HepG2 (cell line): ENCODE measurements at regions of chr6 and their contacts with region 1.

Region 1: GRCh38 chr6:7615611-7616383 is 25.8 kb downstream of the SNRNP48 start:
- DNase-seq: peak; percentile 72
- ATAC-seq: peak; percentile 64
- H3K4me3 ChIP-seq: peak overlapping the region in 1 of 3 experiments; percentile 10; a peak in 1 of 6 replicates
- H3K27ac ChIP-seq: no peak overlapping the region
- H3K4me1 ChIP-seq: peaks cover 21% of the 10 kb centered on the region
- H3K27me3 ChIP-seq: peaks cover 0 to 22% of the 10 kb centered on the region in 2 experiments; a peak in 3 of 5 replicates
- CTCF ChIP-seq: peak; percentile 88
- EP300 ChIP-seq: no peak
- POLR2A ChIP-seq: no peak
- RAD21 ChIP-seq: peak; percentile 83

Region 2: GRCh38 chr6:6676910-6677441 is 938.8 kb before region 1 on chr6:
- CTCF ChIA-PET with region 1: no interaction called
- POLR2A ChIA-PET with region 1: no interaction called
- in situ Hi-C with region 1: loop called (anchors 25 kb)
- intact Hi-C with region 1: no loop called
- DNase-seq: peak; percentile 67
- ATAC-seq: peak; percentile 69
- H3K4me3 ChIP-seq: no peak overlapping the region
- H3K27ac ChIP-seq: no peak overlapping the region
- H3K4me1 ChIP-seq: peaks cover 21% of the 10 kb centered on the region
- H3K27me3 ChIP-seq: peaks cover 0 to 10% of the 10 kb centered on the region in 2 experiments; a peak in 2 of 5 replicates
- CTCF ChIP-seq: peak; percentile 90
- EP300 ChIP-seq: no peak
- POLR2A ChIP-seq: no peak
- RAD21 ChIP-seq: peak; percentile 82

Region 3: GRCh38 chr6:7276199-7276524 is 339.6 kb before region 1 on chr6:
- CTCF ChIA-PET with region 1: interaction called, 18 read pairs
- POLR2A ChIA-PET with region 1: no interaction called
- in situ Hi-C with region 1: loop called (anchors 10 kb)
- intact Hi-C with region 1: loop called (anchors 1 kb)
- DNase-seq: no peak
- ATAC-seq: no peak
- H3K4me3 ChIP-seq: no peak overlapping the region
- H3K27ac ChIP-seq: no peak overlapping the region
- H3K4me1 ChIP-seq: peaks cover 11% of the 10 kb centered on the region
- H3K27me3 ChIP-seq: no peaks in the 10 kb centered on the region
- CTCF ChIP-seq: no peak
- EP300 ChIP-seq: no peak
- POLR2A ChIP-seq: no peak
- RAD21 ChIP-seq: no peak

Region 4: GRCh38 chr6:7341989-7342742 is 273.6 kb before region 1 on chr6:
- CTCF ChIA-PET with region 1: no interaction called
- POLR2A ChIA-PET with region 1: no interaction called
- in situ Hi-C with region 1: no loop called
- intact Hi-C with region 1: loop called (anchors 5 kb)
- DNase-seq: peak; percentile 91
- ATAC-seq: peak; percentile 93
- H3K4me3 ChIP-seq: no peak overlapping the region
- H3K27ac ChIP-seq: no peak overlapping the region
- H3K4me1 ChIP-seq: peaks cover 37% of the 10 kb centered on the region
- H3K27me3 ChIP-seq: no peaks in the 10 kb centered on the region; a peak in 1 of 5 replicates
- CTCF ChIP-seq: no peak; the same call in 1 of the 2 replicates
- EP300 ChIP-seq: peak in 1 of 2 experiments; percentile 46; a peak in 1 of 4 replicates
- POLR2A ChIP-seq: no peak
- RAD21 ChIP-seq: no peak

Region 5: DNA sequence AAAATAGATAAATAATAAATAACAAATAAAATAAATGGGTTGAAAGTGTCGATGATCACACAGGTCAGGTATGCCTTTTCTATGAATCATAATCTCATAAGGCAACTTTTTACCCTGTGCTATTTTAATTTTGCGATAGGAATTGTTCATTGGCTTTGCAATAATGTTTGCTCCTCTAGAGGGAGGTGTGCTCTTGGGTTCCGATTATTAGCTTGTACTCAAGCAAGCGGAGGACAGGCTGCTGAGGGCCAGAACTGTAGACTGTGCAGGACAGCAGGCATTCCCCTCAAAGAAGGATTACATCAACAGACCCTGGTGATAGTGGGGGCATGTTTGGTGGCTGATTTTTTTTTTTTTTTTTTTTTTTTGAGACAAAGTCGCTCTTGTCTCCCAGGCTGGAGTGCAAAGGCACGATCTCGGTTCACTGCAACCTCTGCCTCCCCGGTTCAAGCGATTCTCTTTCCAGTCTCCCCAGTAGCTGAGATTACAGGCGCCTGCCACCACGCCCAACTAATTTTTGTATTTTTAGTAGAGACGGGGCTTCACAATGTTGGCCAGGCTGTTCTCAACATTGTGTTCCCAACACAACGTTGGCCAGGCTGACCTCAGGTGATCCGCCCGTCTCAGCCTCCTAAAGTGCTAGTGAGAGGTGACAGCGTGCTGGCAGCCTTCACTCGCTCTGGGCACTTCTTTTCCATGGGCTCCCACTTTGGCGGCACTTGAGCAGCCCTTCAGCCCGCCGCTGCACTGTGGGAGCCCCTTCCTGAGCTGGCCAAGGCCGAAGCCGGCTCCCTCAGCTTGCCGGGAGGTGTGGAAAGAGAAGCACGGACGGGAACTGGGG is 190.6 kb before region 1 on chr6:
- CTCF ChIA-PET with region 1: interaction called, 10 read pairs
- POLR2A ChIA-PET with region 1: interaction called, 4 read pairs
- in situ Hi-C with region 1: no loop called
- intact Hi-C with region 1: loop called (anchors 1 kb)
- DNase-seq: peak; percentile 79
- ATAC-seq: peak; percentile 85
- H3K4me3 ChIP-seq: no peak overlapping the region
- H3K27ac ChIP-seq: no peak overlapping the region
- H3K4me1 ChIP-seq: peaks cover 24% of the 10 kb centered on the region
- H3K27me3 ChIP-seq: no peaks in the 10 kb centered on the region
- CTCF ChIP-seq: peak; percentile 87
- EP300 ChIP-seq: no peak
- POLR2A ChIP-seq: no peak
- RAD21 ChIP-seq: peak; percentile 84

Region 6: DNA sequence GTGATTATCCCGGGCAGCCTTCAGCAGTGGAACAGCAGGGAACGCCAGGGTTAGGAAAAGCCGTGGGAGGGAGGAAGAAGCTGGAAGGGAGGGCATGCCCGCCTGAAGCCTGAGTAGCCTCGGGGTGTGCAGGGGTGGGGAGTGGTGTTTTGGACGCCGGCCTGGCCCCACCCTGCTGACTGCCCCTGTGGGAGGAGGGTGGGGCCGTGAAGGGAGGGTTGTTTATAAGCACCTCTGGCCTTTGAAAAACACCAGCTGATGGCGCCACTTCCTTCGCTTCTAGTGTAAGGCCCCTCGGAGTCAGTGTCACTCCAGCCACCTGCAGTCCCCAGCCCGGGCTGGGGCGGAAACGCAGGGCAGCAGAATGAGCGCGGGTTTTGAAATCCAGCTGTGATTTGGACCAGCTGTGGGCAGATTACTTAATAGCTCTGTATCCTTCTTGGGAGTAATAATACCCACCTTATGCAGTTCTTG is 57.3 kb after region 1 on chr6:
- CTCF ChIA-PET with region 1: no interaction called
- POLR2A ChIA-PET with region 1: no interaction called
- in situ Hi-C with region 1: no loop called
- intact Hi-C with region 1: no loop called
- DNase-seq: no peak
- ATAC-seq: peak; percentile 45
- H3K4me3 ChIP-seq: no peak overlapping the region
- H3K27ac ChIP-seq: no peak overlapping the region
- H3K4me1 ChIP-seq: no peaks in the 10 kb centered on the region
- H3K27me3 ChIP-seq: peaks cover 1 to 32% of the 10 kb centered on the region in 2 experiments; a peak in 2 of 5 replicates
- CTCF ChIP-seq: no peak
- EP300 ChIP-seq: no peak
- POLR2A ChIP-seq: no peak
- RAD21 ChIP-seq: no peak

Region 7: DNA sequence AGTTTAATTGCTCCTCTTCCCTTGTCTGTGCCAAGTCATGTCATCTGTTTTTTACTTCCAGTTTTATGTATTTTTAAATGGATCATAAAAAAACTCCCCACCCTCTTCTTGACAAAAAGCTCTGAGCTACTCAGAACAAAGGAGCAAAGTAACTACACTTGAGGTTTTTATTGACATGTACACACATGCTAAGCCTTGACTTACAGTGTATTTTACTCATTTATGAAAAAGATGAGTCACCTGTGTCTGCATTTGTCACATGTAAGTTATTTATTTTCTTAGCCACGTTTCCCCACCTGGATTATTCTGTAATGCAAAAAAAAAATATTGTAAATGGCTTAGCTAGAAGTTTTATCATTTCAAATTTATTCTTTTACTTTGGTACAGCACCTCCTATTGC is 1448.4 kb after region 1 on chr6:
- CTCF ChIA-PET with region 1: no interaction called
- POLR2A ChIA-PET with region 1: no interaction called
- in situ Hi-C with region 1: no loop called
- intact Hi-C with region 1: no loop called
- DNase-seq: no peak
- ATAC-seq: no peak
- H3K4me3 ChIP-seq: no peak overlapping the region
- H3K27ac ChIP-seq: no peak overlapping the region
- H3K4me1 ChIP-seq: no peaks in the 10 kb centered on the region
- H3K27me3 ChIP-seq: no peaks in the 10 kb centered on the region
- CTCF ChIP-seq: no peak
- EP300 ChIP-seq: no peak
- POLR2A ChIP-seq: no peak
- RAD21 ChIP-seq: no peak